A549 (cell line): ENCODE measurements at regions of chr1 and their contacts with region 1.

Region 1: GRCh38 chr1:222455188-222455879 is 92.6 kb downstream of the HHIPL2 start:
- DNase-seq: peak; percentile 77 to 78
- ATAC-seq: peak; percentile 94 to 99
- H3K4me3 ChIP-seq: no peak overlapping the region
- H3K27ac ChIP-seq: peak overlapping the region; percentile 16 to 54; a peak in 4 of 6 replicates
- H3K4me1 ChIP-seq: peaks cover 4% of the 10 kb centered on the region; the same call in 2 of the 3 replicates
- CTCF ChIP-seq: peak; percentile 95
- EP300 ChIP-seq: no peak
- POLR2A ChIP-seq: no peak
- RAD21 ChIP-seq: peak; percentile 96 to 97

Region 2: GRCh38 chr1:221478050-221478949 is 977.0 kb before region 1 on chr1:
- CTCF ChIA-PET with region 1: interaction called, 62 read pairs
- POLR2A ChIA-PET with region 1: no interaction called
- DNase-seq: peak; percentile 34 to 79
- ATAC-seq: peak; percentile 99 to 100
- H3K4me3 ChIP-seq: no peak overlapping the region
- H3K27ac ChIP-seq: peak overlapping the region; percentile 14 to 48; a peak in 4 of 6 replicates
- H3K4me1 ChIP-seq: peaks cover 11% of the 10 kb centered on the region
- CTCF ChIP-seq: peak; percentile 89
- EP300 ChIP-seq: no peak
- POLR2A ChIP-seq: no peak
- RAD21 ChIP-seq: peak; percentile 97

Region 3: DNA sequence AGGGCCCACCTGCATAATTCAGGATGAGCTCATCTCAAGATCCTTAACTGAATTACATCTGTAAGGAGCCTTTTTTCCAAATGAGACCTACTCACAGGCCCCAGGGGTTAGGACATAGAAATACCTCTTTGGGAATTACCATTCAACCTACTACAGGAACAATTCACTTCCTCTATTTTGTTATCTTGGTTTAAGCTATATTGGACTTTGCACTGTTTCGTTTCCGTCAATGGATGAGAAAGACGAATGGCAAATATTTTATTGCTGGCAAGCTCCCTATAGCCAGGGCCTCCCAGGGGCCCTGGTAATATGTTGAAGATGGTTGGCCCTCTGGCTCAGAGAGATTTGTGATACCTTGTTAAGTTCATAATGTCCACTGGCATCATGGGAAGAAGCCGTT is 329.3 kb before region 1 on chr1:
- CTCF ChIA-PET with region 1: interaction called, 11 read pairs
- POLR2A ChIA-PET with region 1: no interaction called
- DNase-seq: no peak
- ATAC-seq: no peak
- H3K4me3 ChIP-seq: no peak overlapping the region
- H3K27ac ChIP-seq: no peak overlapping the region
- H3K4me1 ChIP-seq: no peaks in the 10 kb centered on the region
- CTCF ChIP-seq: no peak
- EP300 ChIP-seq: no peak
- POLR2A ChIP-seq: no peak
- RAD21 ChIP-seq: no peak

Region 4: GRCh38 chr1:222441066-222441465 is 14.3 kb before region 1 on chr1:
- CTCF ChIA-PET with region 1: interaction called, 62 read pairs
- POLR2A ChIA-PET with region 1: no interaction called
- DNase-seq: no peak
- ATAC-seq: no peak
- H3K4me3 ChIP-seq: no peak overlapping the region
- H3K27ac ChIP-seq: no peak overlapping the region
- H3K4me1 ChIP-seq: no peaks in the 10 kb centered on the region
- CTCF ChIP-seq: no peak
- EP300 ChIP-seq: no peak
- POLR2A ChIP-seq: no peak
- RAD21 ChIP-seq: no peak

Region 5: GRCh38 chr1:222521299-222522104 is 66.2 kb after region 1 on chr1:
- CTCF ChIA-PET with region 1: no interaction called
- POLR2A ChIA-PET with region 1: no interaction called
- DNase-seq: peak in 1 of 2 experiments; percentile 53
- ATAC-seq: peak; percentile 80 to 88
- H3K4me3 ChIP-seq: no peak overlapping the region
- H3K27ac ChIP-seq: peak overlapping the region; percentile 78 to 83
- H3K4me1 ChIP-seq: peaks cover 41% of the 10 kb centered on the region
- CTCF ChIP-seq: no peak
- EP300 ChIP-seq: no peak
- POLR2A ChIP-seq: no peak
- RAD21 ChIP-seq: no peak